Ascending aorta (tissue), 2 donors: ENCODE measurements at regions of chr13 and their contacts with region 1.

Region 1: DNA sequence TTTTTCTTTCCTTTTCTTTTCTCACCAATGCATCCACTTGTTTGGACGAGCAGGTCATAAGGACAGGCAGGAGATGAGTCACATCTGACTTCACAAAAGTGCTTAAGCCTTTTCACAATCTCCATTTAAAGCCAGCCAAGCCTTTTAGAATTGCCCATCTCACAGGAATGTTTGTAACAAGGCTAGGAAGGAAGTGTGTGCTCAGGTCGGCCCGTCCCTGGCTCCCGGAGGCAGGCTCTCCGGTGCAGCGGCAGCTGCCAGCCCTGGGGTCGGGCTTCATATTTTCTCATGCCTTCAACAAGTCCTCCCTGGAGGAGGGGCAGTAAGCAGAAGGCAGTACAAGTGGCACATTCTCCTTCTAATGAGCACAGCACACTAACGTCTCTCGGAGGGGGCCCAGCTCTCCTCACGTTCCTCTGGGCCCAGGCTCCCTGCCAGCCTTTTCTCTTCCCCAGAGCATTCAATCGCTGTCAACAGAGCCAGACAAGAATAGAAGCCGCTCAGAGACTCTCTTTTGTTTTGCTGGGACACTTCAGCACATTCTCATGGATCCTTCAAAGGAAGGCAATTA is 180.5 kb downstream of the COL4A1 start:
- DNase-seq: peak in 1 of 2 donors; percentile 84
- H3K4me3 ChIP-seq: peak overlapping the region in 1 of 2 donors; percentile 47
- H3K27ac ChIP-seq: peak overlapping the region; percentile 83 to 85
- H3K4me1 ChIP-seq: peaks cover 0 to 27% of the 10 kb centered on the region in 2 donors
- H3K27me3 ChIP-seq: no peaks in the 10 kb centered on the region
- CTCF ChIP-seq: no peak

Region 2: GRCh38 chr13:110874508-110874960 is 748.1 kb after region 1 on chr13:
- intact Hi-C with region 1: loop called (anchors 10 kb)
- DNase-seq: peak; percentile 50 to 93
- H3K4me3 ChIP-seq: peak overlapping the region; percentile 49 to 61
- H3K27ac ChIP-seq: peak overlapping the region in 1 of 2 donors; percentile 53
- H3K4me1 ChIP-seq: peaks cover 11 to 20% of the 10 kb centered on the region in 2 donors
- H3K27me3 ChIP-seq: no peaks in the 10 kb centered on the region
- CTCF ChIP-seq: no peak